Panc1 (cell line): ENCODE measurements at regions of chr14 and their contacts with region 1.

Region 1: GRCh38 chr14:35438910-35439713 is 34.6 kb upstream of the NFKBIA start:
- DNase-seq: no peak
- ATAC-seq: no peak
- H3K4me3 ChIP-seq: no peak overlapping the region
- H3K27ac ChIP-seq: no peak overlapping the region
- H3K4me1 ChIP-seq: no peaks in the 10 kb centered on the region
- H3K27me3 ChIP-seq: no peaks in the 10 kb centered on the region
- CTCF ChIP-seq: peak; percentile 79

Region 2: GRCh38 chr14:35240231-35240630 is 198.9 kb before region 1 on chr14:
- CTCF ChIA-PET with region 1: no interaction called
- POLR2A ChIA-PET with region 1: no interaction called
- in situ Hi-C with region 1: no loop called
- intact Hi-C with region 1: no loop called
- DNase-seq: no peak
- ATAC-seq: no peak
- H3K4me3 ChIP-seq: no peak overlapping the region
- H3K27ac ChIP-seq: no peak overlapping the region
- H3K4me1 ChIP-seq: no peaks in the 10 kb centered on the region
- H3K27me3 ChIP-seq: no peaks in the 10 kb centered on the region
- CTCF ChIP-seq: no peak

Region 3: GRCh38 chr14:35506927-35507326 is 67.8 kb after region 1 on chr14:
- CTCF ChIA-PET with region 1: no interaction called
- POLR2A ChIA-PET with region 1: no interaction called
- in situ Hi-C with region 1: no loop called
- intact Hi-C with region 1: no loop called
- DNase-seq: no peak
- ATAC-seq: no peak
- H3K4me3 ChIP-seq: no peak overlapping the region
- H3K27ac ChIP-seq: no peak overlapping the region
- H3K4me1 ChIP-seq: no peaks in the 10 kb centered on the region
- H3K27me3 ChIP-seq: peaks cover 4% of the 10 kb centered on the region; the same call in 1 of the 2 replicates
- CTCF ChIP-seq: no peak

Region 4: GRCh38 chr14:35687335-35687939 is 248.3 kb after region 1 on chr14:
- CTCF ChIA-PET with region 1: interaction called, 10 read pairs
- POLR2A ChIA-PET with region 1: no interaction called
- in situ Hi-C with region 1: no loop called
- intact Hi-C with region 1: loop called (anchors 5 kb)
- DNase-seq: peak; percentile 17
- ATAC-seq: peak; percentile 68; the same call in 1 of the 2 replicates
- H3K4me3 ChIP-seq: no peak overlapping the region
- H3K27ac ChIP-seq: no peak overlapping the region
- H3K4me1 ChIP-seq: no peaks in the 10 kb centered on the region
- H3K27me3 ChIP-seq: no peaks in the 10 kb centered on the region
- CTCF ChIP-seq: peak; percentile 78; the same call in 1 of the 2 replicates